Prostate gland (tissue), 2 donors: ENCODE measurements at regions of chr14 and their contacts with region 1.

Region 1: GRCh38 chr14:90399541-90400444 is 3.0 kb downstream of the CALM1 start:
- DNase-seq: peak; percentile 95
- H3K4me3 ChIP-seq: peak overlapping the region in 1 of 2 donors; percentile 93
- H3K27ac ChIP-seq: peak overlapping the region; percentile 81 to 89
- H3K4me1 ChIP-seq: peaks cover 26% of the 10 kb centered on the region
- H3K27me3 ChIP-seq: no peaks in the 10 kb centered on the region
- CTCF ChIP-seq: peak; percentile 97 to 99 (median 99)
- POLR2A ChIP-seq: no peak

Region 2: GRCh38 chr14:90331497-90332435 is 68.0 kb before region 1 on chr14 and contains the start of gene NRDE2:
- intact Hi-C with region 1: loop called (anchors 5 kb)
- DNase-seq: peak; percentile 96
- H3K4me3 ChIP-seq: peak within 1 kb of the TSS; percentile 59 to 69
- H3K27ac ChIP-seq: peak within 1 kb of the TSS; percentile 71 to 90
- H3K4me1 ChIP-seq: no peaks in the 10 kb centered on the region
- H3K27me3 ChIP-seq: no peaks in the 10 kb centered on the region
- CTCF ChIP-seq: peak in 2 of 4 experiments; percentile 17
- POLR2A ChIP-seq: no peak
- total RNA-seq, gene NRDE2: 18.8 to 21.5 TPM

Region 3: GRCh38 chr14:90522571-90523191 is 122.9 kb after region 1 on chr14:
- intact Hi-C with region 1: loop called (anchors 5 kb)
- DNase-seq: peak; percentile 75
- H3K4me3 ChIP-seq: no peak overlapping the region
- H3K27ac ChIP-seq: peak overlapping the region; percentile 53 to 65
- H3K4me1 ChIP-seq: peaks cover 22% of the 10 kb centered on the region
- H3K27me3 ChIP-seq: no peaks in the 10 kb centered on the region
- CTCF ChIP-seq: peak in 1 of 4 experiments; percentile 10
- POLR2A ChIP-seq: peak; percentile 35

Region 4: DNA sequence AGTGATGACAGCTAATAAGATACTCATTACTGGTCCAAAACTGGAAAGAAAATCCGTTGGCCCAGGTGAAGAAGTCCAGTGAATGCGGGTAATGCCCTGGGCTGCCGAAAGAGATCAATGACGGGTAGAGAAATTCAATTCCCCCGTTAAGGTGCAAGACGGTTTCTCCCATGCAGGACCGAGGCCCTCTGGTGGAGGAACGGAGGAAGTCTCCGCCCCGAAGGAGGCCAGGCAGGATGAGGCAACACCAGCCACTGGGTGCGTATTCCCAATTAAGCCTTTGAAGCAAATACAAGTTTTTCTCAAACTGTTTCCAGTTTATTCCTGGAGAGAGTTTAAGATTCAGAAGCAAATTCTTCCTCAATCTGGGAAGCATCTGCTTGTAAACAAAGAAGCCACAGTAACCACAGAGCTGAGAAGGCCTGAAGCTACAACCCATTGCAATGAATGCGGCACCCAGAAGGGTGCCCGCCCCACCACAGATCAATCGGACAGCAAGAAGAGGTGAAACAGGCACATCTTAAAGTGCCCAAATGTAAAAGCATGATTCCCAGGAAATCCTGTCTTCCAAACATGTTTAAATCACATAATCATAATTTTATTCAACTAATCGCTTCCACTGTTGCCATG is 297.9 kb after region 1 on chr14:
- intact Hi-C with region 1: loop called (anchors 1 kb)
- DNase-seq: peak; percentile 82
- H3K4me3 ChIP-seq: no peak overlapping the region
- H3K27ac ChIP-seq: peak overlapping the region; percentile 67 to 72
- H3K4me1 ChIP-seq: peaks cover 17% of the 10 kb centered on the region
- H3K27me3 ChIP-seq: no peaks in the 10 kb centered on the region
- CTCF ChIP-seq: peak; percentile 82 to 96 (median 90)
- POLR2A ChIP-seq: no peak

Region 5: DNA sequence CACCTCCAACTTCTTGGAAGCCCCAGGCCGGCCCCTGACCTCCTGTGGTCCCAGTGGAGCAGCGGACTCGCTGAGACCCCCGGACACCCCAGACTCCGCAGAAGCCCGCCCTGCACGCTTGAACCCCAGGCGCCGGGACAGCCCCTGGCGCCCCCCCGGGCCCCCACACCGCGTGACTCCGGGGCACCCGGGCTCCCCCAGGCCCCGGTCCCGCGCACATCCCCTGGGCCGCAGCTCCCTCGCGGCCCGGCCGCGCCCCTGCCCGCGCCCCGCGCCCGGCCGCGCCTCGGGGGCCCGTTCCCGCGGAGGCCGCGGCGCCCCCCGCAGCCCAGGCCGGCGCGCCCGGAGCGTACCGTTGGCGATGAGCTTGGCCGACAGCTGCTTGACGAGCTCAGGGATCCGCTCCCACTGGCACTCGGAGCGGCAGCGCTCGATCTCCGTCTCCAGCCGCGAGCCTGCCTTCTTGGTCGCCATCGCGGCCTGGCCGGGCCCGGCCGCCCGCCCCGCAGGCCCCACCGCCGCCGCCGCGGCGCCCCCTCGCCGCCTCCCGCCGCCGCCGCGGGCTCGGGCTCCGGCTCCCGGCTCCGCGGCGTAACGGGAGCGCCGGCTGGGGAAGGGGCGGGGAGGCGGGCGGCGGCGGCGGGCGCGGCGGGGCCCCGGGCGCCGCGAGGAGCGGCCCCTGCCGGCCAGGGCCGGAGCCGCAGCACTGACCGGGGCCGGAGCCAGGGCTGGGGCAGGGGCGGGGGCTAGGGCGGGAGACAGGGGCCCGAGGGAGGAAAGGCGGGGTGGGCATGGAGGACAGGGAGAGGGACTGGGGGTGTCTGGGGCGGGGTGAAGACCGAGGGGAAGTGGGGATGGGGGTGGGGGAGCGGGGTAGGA is 416.3 kb after region 1 on chr14 and contains the start of gene TTC7B:
- intact Hi-C with region 1: loop called (anchors 5 kb)
- DNase-seq: no peak
- H3K4me3 ChIP-seq: peak within 1 kb of the TSS; percentile 51 to 55
- H3K27ac ChIP-seq: peak within 1 kb of the TSS in 1 of 2 donors; percentile 43
- H3K4me1 ChIP-seq: peaks cover 5% of the 10 kb centered on the region
- H3K27me3 ChIP-seq: no peaks in the 10 kb centered on the region
- CTCF ChIP-seq: no peak
- POLR2A ChIP-seq: no peak
- total RNA-seq, gene TTC7B: 25.0 to 40.7 TPM